Dorsolateral prefrontal cortex (tissue), 120 donors: ENCODE measurements at regions of chr5 and their contacts with region 1.

Region 1: DNA sequence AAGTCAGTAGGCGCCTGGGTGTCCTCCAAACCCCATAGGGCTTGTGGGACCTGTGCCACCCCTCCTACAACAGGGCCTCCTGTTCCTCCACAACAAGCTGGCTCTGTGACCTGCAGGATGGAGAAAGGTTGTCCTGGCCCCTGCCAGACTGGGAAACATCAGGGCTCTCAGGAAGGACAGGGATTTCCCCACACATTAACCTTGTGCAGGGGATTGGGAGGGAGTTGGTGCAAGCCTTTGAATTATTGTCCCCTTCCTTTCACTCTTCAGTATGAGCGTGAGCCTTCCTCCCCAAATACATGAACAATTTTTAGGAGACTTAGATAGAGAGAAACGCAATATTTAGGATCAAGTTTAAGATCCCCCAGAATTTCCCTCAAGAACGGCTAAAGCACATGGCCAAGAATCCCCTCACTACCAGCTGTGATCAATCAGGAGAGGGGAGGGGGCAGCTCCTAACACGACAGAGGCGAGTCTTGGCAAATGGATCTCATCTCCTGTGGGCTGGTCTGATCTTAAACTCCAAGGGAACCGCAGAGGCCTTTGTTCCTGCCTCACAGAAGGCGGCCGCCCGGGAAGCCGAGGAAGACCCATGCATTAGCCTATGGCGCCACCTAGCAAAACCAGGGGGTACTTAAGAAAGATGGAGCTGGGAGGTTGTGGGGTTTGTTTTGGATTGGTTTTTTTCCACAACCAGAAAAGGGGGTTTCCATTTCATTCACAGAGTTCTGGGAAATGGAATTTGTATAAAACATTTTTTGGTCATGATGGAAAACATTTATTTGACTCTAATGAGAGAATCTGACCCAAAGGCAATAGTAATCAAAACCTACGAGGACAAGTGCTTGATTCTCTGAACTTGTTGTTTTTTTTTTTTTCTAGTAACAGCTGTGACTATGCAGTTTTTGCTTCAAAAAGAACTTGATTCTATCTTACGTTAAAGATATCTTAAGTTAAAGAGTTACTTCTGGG is 36.1 kb upstream of the OSMR start:
- DNase-seq: peak; percentile 68 to 89 (median 82)
- H3K4me3 ChIP-seq: peak overlapping the region in 1 of 59 donors; percentile 9
- H3K27ac ChIP-seq: peak overlapping the region in 11 of 59 donors; percentile 3 to 66 (median 35)
- H3K27me3 ChIP-seq: peaks cover 0 to 5% (median 0%) of the 10 kb centered on the region in 45 donors
- CTCF ChIP-seq: peak; percentile 66 to 97 (median 90)

Region 2: DNA sequence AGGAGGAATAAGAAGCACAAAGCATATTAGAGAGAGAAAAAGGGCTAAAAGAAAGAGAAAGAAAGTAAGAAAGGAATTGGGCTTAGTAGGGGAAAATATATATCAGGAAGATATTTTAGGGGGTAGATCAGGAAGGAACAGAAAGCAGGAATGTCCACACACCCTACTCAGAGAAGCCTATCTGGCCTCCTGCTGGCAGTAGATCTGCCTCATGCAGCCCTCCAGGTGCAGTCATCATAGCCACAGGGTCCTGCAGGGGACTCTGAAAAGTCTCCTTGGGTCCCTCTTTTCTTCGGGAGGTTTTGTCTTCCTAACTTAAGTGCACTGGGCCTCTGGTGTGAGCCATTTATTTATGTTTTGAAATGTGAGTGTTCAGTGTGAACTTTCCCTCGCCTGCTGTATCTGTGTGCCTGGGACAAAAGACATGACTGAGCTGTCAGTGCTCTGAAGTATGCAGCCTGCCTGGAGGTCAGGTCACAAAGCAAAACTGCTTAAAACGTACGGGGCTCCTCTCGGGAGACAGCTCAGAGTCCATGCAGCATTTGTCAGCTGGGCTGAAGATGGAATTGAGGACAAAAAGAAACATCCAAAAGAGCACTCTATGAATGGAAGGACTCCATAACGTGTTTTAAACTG is 818.3 kb before region 1 on chr5:
- intact Hi-C with region 1: no loop called
- DNase-seq: no peak
- H3K4me3 ChIP-seq: no peak overlapping the region
- H3K27ac ChIP-seq: no peak overlapping the region
- H3K27me3 ChIP-seq: peaks cover 0 to 4% (median 0%) of the 10 kb centered on the region in 45 donors
- CTCF ChIP-seq: no peak

Region 3: DNA sequence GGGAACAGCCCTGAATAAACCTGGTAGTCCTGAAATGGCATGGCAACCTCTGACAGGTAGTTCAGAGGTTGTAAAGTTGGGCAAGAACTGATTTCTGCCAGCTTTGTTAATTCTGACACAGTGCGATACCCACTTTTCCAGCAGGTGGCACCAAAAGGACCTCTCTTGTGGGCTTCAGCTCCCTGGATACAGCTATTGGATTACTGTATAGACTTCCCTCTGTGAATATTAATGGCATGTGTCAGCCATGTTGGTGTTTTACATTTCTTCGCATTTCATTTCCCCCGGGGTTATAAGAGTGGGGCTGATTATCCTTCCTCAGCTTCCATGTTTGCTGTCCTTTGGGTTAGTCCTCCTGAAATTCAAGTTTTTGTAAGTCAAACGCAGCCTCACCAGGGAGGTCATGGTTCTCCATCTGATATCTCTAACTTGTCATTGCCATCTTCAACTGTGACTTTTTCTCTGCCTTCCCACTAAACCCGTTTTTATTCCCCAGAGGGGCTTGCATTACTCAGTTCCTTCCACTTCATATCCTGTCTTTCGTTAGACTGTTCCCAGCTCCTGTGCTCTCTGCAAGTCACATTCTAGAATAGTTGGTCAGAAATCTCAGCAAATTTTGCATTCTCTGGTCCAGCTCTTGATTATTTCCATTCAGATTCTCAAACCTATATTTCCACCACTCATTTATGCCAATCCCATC is 388.8 kb before region 1 on chr5:
- intact Hi-C with region 1: loop called in 1 of 2 experiments (anchors 5 kb)
- DNase-seq: peak in 7 of 10 donors; percentile 30 to 72 (median 53)
- H3K4me3 ChIP-seq: no peak overlapping the region
- H3K27ac ChIP-seq: no peak overlapping the region
- H3K27me3 ChIP-seq: peaks cover 0 to 6% (median 0%) of the 10 kb centered on the region in 45 donors
- CTCF ChIP-seq: peak; percentile 40 to 84 (median 73)

Region 4: GRCh38 chr5:38745836-38746732 is 63.6 kb before region 1 on chr5:
- intact Hi-C with region 1: loop called in 1 of 2 experiments (anchors 5 kb)
- DNase-seq: no peak
- H3K4me3 ChIP-seq: peak overlapping the region in 5 of 59 donors; percentile 9 to 35 (median 15)
- H3K27ac ChIP-seq: peak overlapping the region in 57 of 59 donors; percentile 34 to 95 (median 84)
- H3K27me3 ChIP-seq: no peaks in the 10 kb centered on the region
- CTCF ChIP-seq: peak in 3 of 56 donors; percentile 3 to 7 (median 6)

Region 5: DNA sequence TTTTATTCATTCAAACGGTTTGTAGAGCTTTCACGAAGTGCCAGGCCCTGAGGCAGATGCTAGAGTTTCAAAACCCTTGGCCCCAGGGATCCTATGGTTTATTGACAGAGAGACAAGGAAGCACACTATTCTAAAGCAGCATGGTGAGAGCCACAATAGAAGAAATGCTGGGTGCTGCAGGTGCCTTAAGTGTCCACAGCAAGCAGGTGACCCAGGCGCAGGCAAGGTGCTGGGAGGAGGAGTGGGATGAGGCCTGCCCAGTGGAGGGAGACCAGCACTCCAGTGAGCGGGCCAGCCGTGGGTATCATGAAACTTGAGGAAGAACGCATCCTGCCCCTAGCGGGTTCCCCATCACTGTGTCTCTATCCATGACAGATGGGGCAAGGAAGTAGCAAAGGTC is 107.1 kb after region 1 on chr5:
- intact Hi-C with region 1: no loop called
- DNase-seq: no peak
- H3K4me3 ChIP-seq: no peak overlapping the region
- H3K27ac ChIP-seq: no peak overlapping the region
- H3K27me3 ChIP-seq: no peaks in the 10 kb centered on the region
- CTCF ChIP-seq: no peak